ENCODE measurements at regions of chr16 and their contacts with region 1.

Region 1: DNA sequence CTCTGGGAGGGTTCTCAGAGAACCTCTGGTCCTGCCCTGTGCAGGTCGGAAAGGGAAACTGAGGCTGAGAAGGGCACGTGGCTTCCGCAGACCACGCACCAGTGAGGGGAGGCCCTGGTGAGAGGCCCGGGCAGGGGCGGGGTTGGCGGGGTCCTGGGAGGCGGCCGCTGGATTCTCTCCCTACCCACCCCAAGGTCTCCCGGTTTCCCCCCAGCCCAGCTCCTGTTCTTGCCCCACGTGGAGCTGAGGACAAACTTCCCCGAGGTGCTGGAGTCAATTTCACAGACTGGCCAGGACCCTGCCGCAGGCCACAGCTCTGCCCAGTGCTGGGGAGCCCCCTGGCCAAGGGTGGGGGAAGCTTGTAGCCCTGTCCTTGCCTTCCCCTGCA is 11.5 kb downstream of the CCL17 start:
- DNase-seq: no peak
- H3K4me3 ChIP-seq: no peak overlapping the region
- H3K27ac ChIP-seq: no peak overlapping the region
- H3K4me1 ChIP-seq: peaks cover 3% of the 10 kb centered on the region
- H3K27me3 ChIP-seq: no peaks in the 10 kb centered on the region
- CTCF ChIP-seq: no peak

Region 2: GRCh38 chr16:57084257-57084770 is 331.8 kb before region 1 on chr16:
- CTCF ChIA-PET with region 1: interaction called, 7 read pairs
- POLR2A ChIA-PET with region 1: no interaction called
- intact Hi-C with region 1: loop called (anchors 5 kb)
- DNase-seq: peak; percentile 87
- H3K4me3 ChIP-seq: no peak overlapping the region
- H3K27ac ChIP-seq: no peak overlapping the region
- H3K4me1 ChIP-seq: no peaks in the 10 kb centered on the region
- H3K27me3 ChIP-seq: no peaks in the 10 kb centered on the region
- CTCF ChIP-seq: peak; percentile 98

Region 3: GRCh38 chr16:57519796-57520360 is 103.8 kb after region 1 on chr16:
- CTCF ChIA-PET with region 1: interaction called, 10 read pairs
- POLR2A ChIA-PET with region 1: no interaction called
- intact Hi-C with region 1: loop called (anchors 2 kb)
- DNase-seq: peak; percentile 80
- H3K4me3 ChIP-seq: no peak overlapping the region
- H3K27ac ChIP-seq: no peak overlapping the region
- H3K4me1 ChIP-seq: no peaks in the 10 kb centered on the region
- H3K27me3 ChIP-seq: no peaks in the 10 kb centered on the region
- CTCF ChIP-seq: peak; percentile 98